Ascending aorta (tissue), 2 donors: ENCODE measurements at regions of chr16 and their contacts with region 1.

Region 1: DNA sequence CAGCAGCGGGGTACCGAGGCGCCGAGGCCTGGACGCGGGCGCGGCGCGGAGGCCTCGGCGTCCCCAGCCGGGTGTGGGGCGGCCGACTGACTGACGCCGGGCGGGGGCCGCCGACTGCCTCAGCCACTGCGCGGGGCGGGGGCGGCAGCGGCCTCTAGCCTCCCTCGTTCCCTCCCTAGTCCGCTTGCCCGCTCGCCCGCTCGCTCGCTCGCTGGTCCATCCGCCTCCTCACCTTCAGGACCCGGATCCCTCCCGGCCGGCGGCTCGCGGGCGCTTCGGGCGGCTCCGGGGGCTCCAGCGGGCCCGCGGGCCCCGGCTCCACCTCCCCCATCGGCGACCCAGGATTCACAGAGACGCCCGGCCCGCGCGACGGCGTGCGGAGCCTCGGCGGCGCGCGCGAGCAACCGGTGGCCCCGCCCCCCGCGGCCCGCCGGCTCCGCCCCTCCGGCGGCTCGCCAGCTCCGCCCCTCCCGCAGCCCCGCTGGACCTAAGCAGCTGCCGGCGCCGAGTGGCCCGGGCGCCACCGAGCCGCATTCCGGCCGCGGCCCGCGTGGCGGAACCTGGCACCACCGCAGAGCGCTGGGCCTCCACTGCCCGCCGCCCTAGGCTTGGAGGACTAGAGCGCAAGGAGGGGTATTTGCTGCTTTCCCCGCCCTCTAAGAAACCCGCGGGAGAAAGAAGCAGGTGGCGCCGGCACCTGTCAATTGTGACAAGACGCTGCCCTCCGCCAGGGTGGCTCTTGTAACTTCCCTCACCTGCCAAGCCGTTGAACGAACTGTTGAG is 773 bp downstream of the PHLPP2 start:
- DNase-seq: peak; percentile 14 to 84
- H3K4me3 ChIP-seq: peak overlapping the region; percentile 87 to 94
- H3K27ac ChIP-seq: peak overlapping the region; percentile 93 to 97
- H3K4me1 ChIP-seq: peaks cover 0 to 17% of the 10 kb centered on the region in 2 donors
- H3K27me3 ChIP-seq: no peaks in the 10 kb centered on the region
- CTCF ChIP-seq: no peak

Region 2: DNA sequence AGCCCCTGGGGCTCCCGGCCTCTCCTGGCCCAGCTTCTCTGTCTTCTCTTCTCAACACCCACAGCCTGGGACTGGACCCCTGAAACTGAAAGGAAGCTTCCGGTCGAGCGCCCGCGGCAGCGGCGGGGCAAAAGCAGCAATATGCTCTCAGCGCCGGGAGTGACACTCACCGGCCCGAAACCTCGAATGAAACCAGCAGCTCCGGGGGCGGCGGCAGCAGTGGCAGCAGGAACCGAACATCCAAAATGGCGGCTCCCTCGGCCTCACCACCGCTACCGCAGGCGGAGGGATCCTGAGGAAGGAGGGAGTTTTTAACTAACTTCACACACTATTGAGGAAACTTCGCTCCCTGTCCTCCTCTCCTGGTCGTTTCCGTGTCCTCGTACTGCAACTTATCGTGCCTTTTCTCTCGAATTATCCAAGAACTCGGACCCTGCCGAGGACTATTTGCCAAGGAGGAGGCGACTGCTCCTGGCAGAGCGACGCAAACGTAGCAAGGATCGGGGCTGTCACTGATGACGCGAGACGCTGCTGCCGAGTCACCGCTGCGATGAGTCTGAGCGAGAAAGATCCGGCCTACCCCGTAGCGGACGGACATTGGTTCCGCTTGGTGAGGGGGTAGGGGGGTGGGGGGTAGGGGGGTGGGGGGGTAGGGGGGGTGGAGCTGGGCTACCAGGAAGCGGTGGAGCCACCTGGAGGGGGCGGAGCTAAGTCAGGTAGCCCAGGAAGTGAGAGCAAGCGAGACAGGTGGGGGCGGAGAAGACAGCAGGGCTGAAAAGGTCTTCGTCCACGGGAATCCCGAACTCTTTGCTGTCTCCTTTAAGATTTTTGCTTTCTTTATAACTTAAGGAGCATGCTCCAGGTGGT is 85.1 kb after region 1 on chr16 and contains the start of gene AP1G1:
- intact Hi-C with region 1: loop called (anchors 2 kb)
- DNase-seq: peak; percentile 87 to 98
- H3K4me3 ChIP-seq: peak within 1 kb of the TSS; percentile 98 to 99
- H3K27ac ChIP-seq: peak within 1 kb of the TSS; percentile 100
- H3K4me1 ChIP-seq: peaks cover 9 to 24% of the 10 kb centered on the region in 2 donors
- H3K27me3 ChIP-seq: no peaks in the 10 kb centered on the region
- CTCF ChIP-seq: no peak
- total RNA-seq, gene AP1G1: 40.7 TPM

Region 3: DNA sequence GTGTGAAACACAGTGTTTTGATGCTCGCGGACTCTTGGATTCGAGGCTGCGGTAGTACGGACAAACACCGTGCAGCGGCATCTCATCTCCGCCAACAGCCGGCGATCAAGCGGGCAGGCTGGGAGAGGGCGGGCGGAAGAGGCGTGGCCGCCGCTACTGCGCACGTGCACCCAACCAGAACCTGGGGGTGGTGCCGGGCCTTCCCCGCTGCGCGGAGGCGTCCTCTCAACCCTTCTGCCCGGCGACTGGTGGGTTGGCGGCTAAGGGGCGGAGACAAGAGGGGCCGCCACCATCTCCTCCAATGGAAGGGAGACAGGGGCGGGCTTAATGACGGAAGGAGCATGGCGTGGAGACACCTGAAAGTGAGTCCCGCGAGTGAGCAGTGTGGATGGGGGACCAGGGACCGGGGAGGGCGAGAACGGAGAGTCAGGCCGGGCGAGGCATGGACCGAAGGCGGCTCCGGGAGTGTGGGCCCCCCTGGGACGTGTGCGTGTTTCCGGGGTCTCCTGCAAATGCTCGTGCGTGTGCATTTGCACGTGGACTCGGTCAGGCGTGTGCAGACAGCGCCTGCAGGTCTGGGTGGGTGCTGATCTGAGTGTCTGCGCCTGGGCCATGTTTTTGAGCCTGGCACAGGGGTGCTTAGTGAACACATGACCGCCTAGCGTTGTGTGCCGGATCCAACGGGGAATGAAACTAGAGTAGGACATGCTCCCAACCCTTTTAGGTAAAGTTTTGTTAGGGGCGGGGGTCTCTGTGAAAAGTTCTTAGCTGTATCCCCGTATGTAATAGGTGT is 284.9 kb after region 1 on chr16 and contains the start of gene DHODH:
- intact Hi-C with region 1: loop called (anchors 1 kb)
- DNase-seq: peak; percentile 95 to 99
- H3K4me3 ChIP-seq: peak within 1 kb of the TSS; percentile 80 to 94
- H3K27ac ChIP-seq: peak within 1 kb of the TSS; percentile 42 to 48
- H3K4me1 ChIP-seq: peaks cover 0 to 2% of the 10 kb centered on the region in 2 donors
- H3K27me3 ChIP-seq: no peaks in the 10 kb centered on the region
- CTCF ChIP-seq: peak in 2 of 3 experiments; percentile 6 to 15
- total RNA-seq, gene DHODH: 8.6 TPM